ENCODE measurements at regions of chr1 and their contacts with region 1.

Region 1: DNA sequence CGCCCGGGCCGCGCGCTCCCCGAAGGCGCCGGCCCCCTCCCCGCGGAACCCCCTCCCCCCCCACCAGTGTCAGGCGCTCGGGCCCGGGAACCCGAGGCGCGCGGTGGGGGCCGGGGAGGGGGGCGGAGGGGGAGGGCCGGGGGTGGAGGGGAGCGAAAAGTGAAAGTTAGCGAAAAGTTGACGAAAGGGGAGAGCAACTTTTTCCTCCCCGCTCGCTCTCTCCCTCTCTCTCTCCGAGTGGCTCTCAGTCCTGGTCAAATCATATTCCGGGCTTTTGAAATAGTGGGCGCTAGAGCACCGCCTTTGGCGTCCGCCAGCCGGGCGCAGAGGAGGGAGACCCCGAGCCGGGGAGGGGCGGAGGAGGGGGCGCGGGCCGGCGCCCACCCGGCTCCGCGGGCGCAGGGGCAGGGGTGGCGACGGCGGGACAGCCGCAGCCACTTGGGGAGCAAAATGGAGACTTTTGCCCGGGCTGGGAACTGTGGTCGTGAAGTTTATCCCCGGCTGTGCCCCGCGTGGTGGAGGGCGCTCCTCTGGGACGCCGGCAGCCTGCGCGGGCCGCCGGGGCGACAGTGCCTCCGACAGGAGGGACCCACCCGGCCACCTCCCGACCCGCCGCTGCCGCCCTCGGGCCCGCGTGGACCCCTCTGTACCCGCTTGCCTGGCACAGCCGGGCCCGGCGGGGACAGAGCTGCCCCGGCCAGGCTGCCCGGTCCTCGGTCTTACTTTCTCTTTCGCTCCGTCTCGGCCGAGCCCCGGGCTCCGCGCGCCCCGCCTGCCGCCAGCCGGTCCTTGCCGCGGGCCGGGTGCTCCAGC is 694 bp downstream of the PRDM16 start:
- DNase-seq: peak in 1 of 2 donors; percentile 68
- ATAC-seq: peak in 7 of 8 donors; percentile 35 to 61 (median 42)
- H3K4me3 ChIP-seq: peak overlapping the region; percentile 70 to 92 (median 80)
- H3K27ac ChIP-seq: peak overlapping the region; percentile 76 to 97 (median 92)
- H3K4me1 ChIP-seq: peaks cover 2 to 81% (median 36%) of the 10 kb centered on the region in 9 donors
- H3K27me3 ChIP-seq: peaks cover 17 to 94% (median 79%) of the 10 kb centered on the region in 7 donors
- CTCF ChIP-seq: peak in 8 of 9 donors; percentile 27 to 70 (median 51)

Region 2: GRCh38 chr1:3032971-3033789 is 36.5 kb before region 1 on chr1:
- intact Hi-C with region 1: no loop called
- DNase-seq: no peak
- ATAC-seq: no peak
- H3K4me3 ChIP-seq: no peak overlapping the region
- H3K27ac ChIP-seq: no peak overlapping the region
- H3K4me1 ChIP-seq: no peaks in the 10 kb centered on the region
- H3K27me3 ChIP-seq: peaks cover 3 to 69% (median 53%) of the 10 kb centered on the region in 7 donors
- CTCF ChIP-seq: no peak

Region 3: GRCh38 chr1:3126756-3127597 is 57.3 kb after region 1 on chr1:
- intact Hi-C with region 1: loop called in 1 of 10 experiments (anchors 10 kb)
- DNase-seq: no peak
- ATAC-seq: peak in 7 of 8 donors; percentile 6 to 59 (median 31)
- H3K4me3 ChIP-seq: peak overlapping the region in 3 of 10 donors; percentile 2 to 19 (median 9)
- H3K27ac ChIP-seq: peak overlapping the region; percentile 64 to 86 (median 74)
- H3K4me1 ChIP-seq: peaks cover 22 to 79% (median 50%) of the 10 kb centered on the region in 9 donors
- H3K27me3 ChIP-seq: no peaks in the 10 kb centered on the region
- CTCF ChIP-seq: no peak

Region 4: GRCh38 chr1:3186513-3186921 is 116.8 kb after region 1 on chr1:
- intact Hi-C with region 1: loop called in 1 of 10 experiments (anchors 10 kb)
- DNase-seq: peak; percentile 67 to 91
- ATAC-seq: peak; percentile 56 to 93 (median 84)
- H3K4me3 ChIP-seq: peak overlapping the region in 1 of 10 donors; percentile 7
- H3K27ac ChIP-seq: peak overlapping the region; percentile 52 to 90 (median 80)
- H3K4me1 ChIP-seq: peaks cover 19 to 57% (median 31%) of the 10 kb centered on the region in 9 donors
- H3K27me3 ChIP-seq: peaks cover 0 to 28% (median 0%) of the 10 kb centered on the region in 7 donors
- CTCF ChIP-seq: no peak

Region 5: GRCh38 chr1:3283849-3284248 is 214.2 kb after region 1 on chr1:
- intact Hi-C with region 1: loop called in 9 of 10 experiments (anchors 2 to 10 kb)
- DNase-seq: peak; percentile 53 to 62
- ATAC-seq: peak; percentile 60 to 89 (median 74)
- H3K4me3 ChIP-seq: peak overlapping the region in 5 of 10 donors; percentile 3 to 30 (median 20)
- H3K27ac ChIP-seq: peak overlapping the region in 8 of 10 donors; percentile 44 to 75 (median 55)
- H3K4me1 ChIP-seq: peaks cover 0 to 24% (median 13%) of the 10 kb centered on the region in 9 donors
- H3K27me3 ChIP-seq: peaks cover 0 to 35% (median 15%) of the 10 kb centered on the region in 7 donors
- CTCF ChIP-seq: peak; percentile 46 to 89 (median 74)

Region 6: DNA sequence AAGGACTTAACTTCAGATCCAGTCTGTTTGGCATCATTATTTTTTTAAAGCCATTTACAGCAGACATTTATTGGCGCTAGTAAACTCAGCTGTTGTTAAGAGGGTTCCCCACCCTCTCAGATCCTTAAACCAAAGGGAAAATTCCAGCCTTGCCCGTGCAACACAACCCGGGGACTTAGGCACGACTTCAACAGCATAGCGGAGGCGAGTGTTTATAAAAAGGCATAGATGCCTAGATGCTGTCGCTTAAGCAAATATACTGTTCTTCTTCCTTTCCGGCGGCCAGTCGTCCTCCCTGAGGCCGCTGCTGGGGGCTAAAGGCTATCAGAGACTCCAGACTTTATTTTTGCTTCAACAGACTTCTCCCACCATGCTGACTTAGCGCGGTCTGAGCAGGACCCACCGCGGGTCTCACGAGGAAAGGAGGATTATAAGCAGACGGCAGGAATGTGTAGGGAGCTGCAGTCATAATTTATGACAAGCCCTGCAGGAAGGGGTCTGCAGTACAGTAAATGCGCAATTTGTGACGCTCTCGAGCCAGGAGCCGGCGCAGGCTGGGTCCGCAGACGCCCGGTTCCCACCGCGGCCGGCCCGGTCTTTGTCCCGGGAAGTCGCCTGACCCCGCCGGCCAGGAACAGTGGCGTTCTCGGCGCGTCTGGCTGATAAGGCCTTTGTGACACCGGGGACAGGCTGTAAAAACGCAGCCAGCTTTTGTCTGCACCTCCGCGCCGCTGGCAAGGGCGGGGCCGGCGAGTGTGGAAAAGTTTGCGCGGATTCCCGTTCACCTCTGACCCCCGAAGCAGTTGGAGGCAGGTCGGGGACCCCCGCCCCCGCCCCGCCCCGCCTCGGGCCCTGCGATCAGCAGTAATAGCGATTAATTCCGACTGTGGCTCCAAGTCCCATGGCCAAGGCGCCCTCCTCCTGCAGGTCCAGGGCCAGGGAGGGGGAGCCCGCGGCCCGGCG is 323.6 kb after region 1 on chr1:
- intact Hi-C with region 1: loop called in 1 of 10 experiments (anchors 5 kb)
- DNase-seq: peak; percentile 65 to 76
- ATAC-seq: peak; percentile 56 to 88 (median 83)
- H3K4me3 ChIP-seq: peak overlapping the region in 9 of 10 donors; percentile 27 to 58 (median 51)
- H3K27ac ChIP-seq: peak overlapping the region; percentile 58 to 88 (median 79)
- H3K4me1 ChIP-seq: peaks cover 7 to 32% (median 18%) of the 10 kb centered on the region in 9 donors
- H3K27me3 ChIP-seq: peaks cover 0 to 62% (median 23%) of the 10 kb centered on the region in 7 donors
- CTCF ChIP-seq: peak in 1 of 9 donors; percentile 23

Region 7: GRCh38 chr1:3410142-3410925 is 340.6 kb after region 1 on chr1:
- intact Hi-C with region 1: loop called in 7 of 10 experiments (anchors 1 to 10 kb)
- DNase-seq: peak; percentile 58 to 65
- ATAC-seq: peak; percentile 65 to 88 (median 82)
- H3K4me3 ChIP-seq: no peak overlapping the region
- H3K27ac ChIP-seq: no peak overlapping the region
- H3K4me1 ChIP-seq: peaks cover 3 to 30% (median 8%) of the 10 kb centered on the region in 9 donors
- H3K27me3 ChIP-seq: no peaks in the 10 kb centered on the region
- CTCF ChIP-seq: peak; percentile 54 to 80 (median 75)

Measured in heart right ventricle (tissue), 16 donors.